ENCODE measurements at regions of chr12 and their contacts with region 1.

Region 1: GRCh38 chr12:30754709-30755394 is at the start of gene CAPRIN2:
- DNase-seq: peak; percentile 82 to 97 (median 89)
- ATAC-seq: peak; percentile 91 to 96 (median 94)
- H3K4me3 ChIP-seq: peak within 1 kb of the TSS; percentile 68 to 86
- H3K4me3 Mint-ChIP-seq: peak within 1 kb of the TSS; percentile 91 to 95 (median 94)
- H3K27ac ChIP-seq: peak within 1 kb of the TSS; percentile 73
- H3K27ac Mint-ChIP-seq: peak within 1 kb of the TSS; percentile 84 to 87
- H3K4me1 ChIP-seq: peaks cover 15 to 17% of the 10 kb centered on the region in 2 experiments
- H3K4me1 Mint-ChIP-seq: peaks cover 44 to 48% (median 45%) of the 10 kb centered on the region in 3 donors
- H3K27me3 ChIP-seq: no peaks in the 10 kb centered on the region
- H3K27me3 Mint-ChIP-seq: no peaks in the 10 kb centered on the region
- total RNA-seq, gene CAPRIN2: 26.3 to 38.9 (median 33.3) TPM

Region 2: DNA sequence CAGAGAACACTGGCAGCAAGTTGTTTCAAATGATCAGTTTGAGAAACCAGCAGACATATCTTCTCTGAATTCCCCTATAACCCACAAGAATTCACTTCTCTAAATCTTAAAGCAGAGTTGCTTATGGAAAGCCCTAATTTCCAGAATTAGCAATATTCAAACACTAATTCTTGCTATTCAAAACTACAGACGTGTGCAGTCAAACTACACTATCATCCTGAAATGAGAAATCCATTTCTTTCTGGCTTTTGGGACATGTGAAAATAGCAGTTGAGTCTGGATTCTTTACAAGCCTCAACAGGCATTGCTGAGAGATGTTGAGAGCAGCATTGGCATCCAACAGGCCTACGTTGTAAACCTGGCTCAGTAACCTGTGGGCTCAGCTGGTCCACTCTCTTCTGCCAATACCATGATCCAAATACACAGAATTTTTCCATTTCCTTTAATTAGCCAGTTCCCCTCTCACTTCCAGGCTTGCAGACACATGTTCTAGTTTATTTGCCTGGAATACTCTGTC is 896.5 kb before region 1 on chr12:
- CTCF ChIA-PET with region 1: no interaction called
- POLR2A ChIA-PET with region 1: no interaction called
- DNase-seq: no peak
- ATAC-seq: no peak
- H3K4me3 ChIP-seq: no peak overlapping the region
- H3K4me3 Mint-ChIP-seq: no peak overlapping the region
- H3K27ac ChIP-seq: no peak overlapping the region
- H3K27ac Mint-ChIP-seq: no peak overlapping the region
- H3K4me1 ChIP-seq: no peaks in the 10 kb centered on the region
- H3K4me1 Mint-ChIP-seq: no peaks in the 10 kb centered on the region
- H3K27me3 ChIP-seq: no peaks in the 10 kb centered on the region
- H3K27me3 Mint-ChIP-seq: peaks cover 0 to 3% of the 10 kb centered on the region in 2 donors

Region 3: DNA sequence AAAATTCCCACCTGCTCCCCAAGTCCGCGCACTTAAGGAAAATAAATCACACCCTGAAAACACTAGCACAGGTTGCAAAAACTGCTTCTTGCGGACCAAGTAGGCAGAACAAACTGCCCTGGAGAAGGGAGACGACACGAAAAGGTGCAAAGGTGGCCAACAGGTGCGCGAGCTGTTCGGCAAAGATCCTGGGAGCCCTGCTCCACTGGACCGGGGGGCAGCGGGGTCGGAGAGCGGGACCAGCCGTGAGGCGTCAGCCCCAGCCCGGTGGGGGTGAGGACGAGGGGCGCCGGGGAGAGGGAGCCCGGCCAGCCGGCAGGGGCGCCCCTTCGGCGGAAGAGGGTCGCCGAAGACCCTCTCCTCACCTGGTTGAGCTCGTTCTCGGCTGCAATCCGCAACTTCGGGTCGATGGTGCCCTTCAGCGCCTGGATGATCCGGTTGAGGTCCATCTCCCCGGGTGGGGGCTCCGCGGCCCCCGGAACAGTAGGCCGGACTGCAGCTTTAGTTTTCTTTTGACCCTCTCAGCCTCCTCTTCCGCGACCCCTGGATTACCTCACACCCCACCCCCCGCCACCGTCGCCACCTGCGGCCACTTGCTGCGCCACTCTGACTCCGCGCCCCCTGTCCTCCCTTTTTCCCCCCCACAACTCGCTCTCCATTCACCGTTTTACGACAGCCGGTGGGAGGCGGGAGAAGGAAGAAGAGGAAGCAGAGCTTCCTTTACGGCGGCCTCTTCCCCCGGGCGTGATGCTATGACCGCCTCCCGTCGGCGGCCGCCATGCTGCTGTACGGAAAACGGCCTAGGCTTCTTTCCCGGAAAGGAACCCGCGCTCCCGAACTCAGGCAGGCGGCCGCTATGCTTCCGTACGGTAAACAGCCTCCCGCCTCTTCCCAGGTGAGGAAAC is 59.4 kb before region 1 on chr12 and contains the start of gene IPO8:
- CTCF ChIA-PET with region 1: interaction called, 5 to 12 read pairs
- POLR2A ChIA-PET with region 1: interaction called, 3 to 4 read pairs
- DNase-seq: peak; percentile 67 to 89 (median 81)
- ATAC-seq: peak; percentile 90 to 93 (median 90)
- H3K4me3 ChIP-seq: peak within 1 kb of the TSS; percentile 88 to 92
- H3K4me3 Mint-ChIP-seq: peak within 1 kb of the TSS; percentile 95 to 97 (median 96)
- H3K27ac ChIP-seq: peak within 1 kb of the TSS; percentile 61
- H3K27ac Mint-ChIP-seq: peak within 1 kb of the TSS; percentile 87 to 93
- H3K4me1 ChIP-seq: peaks cover 17 to 21% of the 10 kb centered on the region in 2 experiments
- H3K4me1 Mint-ChIP-seq: peaks cover 45 to 50% (median 48%) of the 10 kb centered on the region in 3 donors
- H3K27me3 ChIP-seq: no peaks in the 10 kb centered on the region
- H3K27me3 Mint-ChIP-seq: no peaks in the 10 kb centered on the region
- total RNA-seq, gene IPO8: 29.9 to 54.9 (median 45.1) TPM

Region 4: DNA sequence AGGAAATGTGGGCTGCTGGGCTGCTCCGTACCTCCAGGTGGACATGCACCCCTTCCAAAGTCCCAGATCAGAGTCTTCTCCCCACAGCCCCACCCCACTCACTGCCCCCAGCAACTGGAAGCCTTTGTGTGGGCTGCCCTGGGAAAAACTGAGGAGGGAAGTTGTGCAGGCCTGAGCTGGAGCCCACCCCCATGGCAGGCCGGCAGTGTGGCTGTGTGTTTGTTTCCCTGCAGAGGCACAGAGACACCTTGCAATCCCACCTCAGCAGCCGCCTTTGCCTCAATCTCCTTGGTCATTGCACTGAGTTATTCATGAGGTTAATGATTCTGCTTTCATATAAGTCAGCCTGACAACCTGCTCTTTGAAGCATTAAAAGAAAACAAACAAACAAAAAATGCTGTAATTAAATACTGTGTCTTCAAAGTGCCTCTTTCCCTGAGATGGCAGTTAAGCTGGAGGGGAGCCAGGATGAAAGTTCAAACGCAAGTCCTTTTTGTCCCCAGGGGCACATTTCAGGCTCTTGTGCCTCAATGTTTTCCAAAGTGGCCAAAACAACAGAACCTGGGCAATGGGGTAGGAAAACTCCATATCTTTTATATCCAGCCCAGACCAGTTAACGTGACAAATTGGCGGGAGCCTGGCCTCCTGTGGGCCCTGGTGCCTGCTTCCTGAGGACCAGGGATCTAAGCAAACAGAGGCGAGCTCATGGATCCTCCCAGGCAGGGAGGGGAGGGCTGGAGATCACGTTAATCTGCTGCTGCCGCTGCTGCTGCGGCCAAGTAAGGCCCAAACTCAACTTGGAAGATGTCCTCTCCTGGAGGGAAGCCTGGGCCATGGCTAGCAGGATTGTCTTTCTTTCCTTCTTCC is 119.8 kb after region 1 on chr12:
- CTCF ChIA-PET with region 1: no interaction called
- POLR2A ChIA-PET with region 1: no interaction called
- DNase-seq: no peak
- ATAC-seq: no peak
- H3K4me3 ChIP-seq: no peak overlapping the region
- H3K4me3 Mint-ChIP-seq: no peak overlapping the region
- H3K27ac ChIP-seq: no peak overlapping the region
- H3K27ac Mint-ChIP-seq: no peak overlapping the region
- H3K4me1 ChIP-seq: peaks cover 0 to 4% of the 10 kb centered on the region in 2 experiments
- H3K4me1 Mint-ChIP-seq: peaks cover 6 to 7% (median 7%) of the 10 kb centered on the region in 3 donors
- H3K27me3 ChIP-seq: peaks cover 0 to 20% of the 10 kb centered on the region in 2 experiments
- H3K27me3 Mint-ChIP-seq: peaks cover 22 to 34% of the 10 kb centered on the region in 2 donors

Region 5: GRCh38 chr12:31035967-31036665 is 281.3 kb after region 1 on chr12:
- CTCF ChIA-PET with region 1: no interaction called
- POLR2A ChIA-PET with region 1: no interaction called
- DNase-seq: no peak
- ATAC-seq: no peak
- H3K4me3 ChIP-seq: no peak overlapping the region
- H3K4me3 Mint-ChIP-seq: no peak overlapping the region
- H3K27ac ChIP-seq: no peak overlapping the region
- H3K27ac Mint-ChIP-seq: no peak overlapping the region
- H3K4me1 ChIP-seq: no peaks in the 10 kb centered on the region
- H3K4me1 Mint-ChIP-seq: no peaks in the 10 kb centered on the region
- H3K27me3 ChIP-seq: peaks cover 0 to 38% of the 10 kb centered on the region in 2 experiments
- H3K27me3 Mint-ChIP-seq: peaks cover 0 to 18% of the 10 kb centered on the region in 2 donors

Measured in T-cell (primary cell).